Left ventricle myocardium inferior (tissue), 1 donor: ENCODE measurements at regions of chr15 and their contacts with region 1.

Region 1: GRCh38 chr15:30065025-30065801 is 17.5 kb upstream of the GOLGA8J start:
- DNase-seq: no peak
- H3K4me3 ChIP-seq: no peak overlapping the region
- H3K27ac ChIP-seq: no peak overlapping the region
- H3K4me1 ChIP-seq: no peaks in the 10 kb centered on the region
- H3K27me3 ChIP-seq: no peaks in the 10 kb centered on the region
- CTCF ChIP-seq: no peak

Region 2: DNA sequence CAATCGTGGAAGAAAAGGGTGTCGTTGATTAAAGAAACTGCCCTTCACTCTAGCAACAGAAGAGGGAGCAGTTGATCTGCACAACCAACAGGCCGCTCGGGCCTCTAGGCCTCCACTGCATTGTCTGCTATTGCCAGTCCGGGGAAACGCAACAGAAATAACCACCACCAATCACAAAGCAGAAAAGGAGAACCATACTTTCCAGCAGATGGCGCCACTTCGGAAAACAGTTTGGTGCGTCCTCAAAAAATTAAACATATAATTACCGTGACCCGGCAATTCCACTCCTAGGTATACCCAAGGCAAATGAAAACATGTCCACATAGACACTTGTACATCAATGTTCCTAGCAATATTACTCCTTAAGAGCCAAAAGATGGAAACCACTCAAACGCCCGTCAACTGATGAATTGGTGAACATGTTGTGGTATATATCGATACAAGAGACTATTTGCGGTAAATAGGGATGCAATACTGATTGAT is 397.1 kb before region 1 on chr15:
- intact Hi-C with region 1: loop called (anchors 10 kb)
- DNase-seq: no peak
- H3K4me3 ChIP-seq: no peak overlapping the region
- H3K27ac ChIP-seq: no peak overlapping the region
- H3K4me1 ChIP-seq: no peaks in the 10 kb centered on the region
- H3K27me3 ChIP-seq: peaks cover 18% of the 10 kb centered on the region
- CTCF ChIP-seq: peak; percentile 83

Region 3: DNA sequence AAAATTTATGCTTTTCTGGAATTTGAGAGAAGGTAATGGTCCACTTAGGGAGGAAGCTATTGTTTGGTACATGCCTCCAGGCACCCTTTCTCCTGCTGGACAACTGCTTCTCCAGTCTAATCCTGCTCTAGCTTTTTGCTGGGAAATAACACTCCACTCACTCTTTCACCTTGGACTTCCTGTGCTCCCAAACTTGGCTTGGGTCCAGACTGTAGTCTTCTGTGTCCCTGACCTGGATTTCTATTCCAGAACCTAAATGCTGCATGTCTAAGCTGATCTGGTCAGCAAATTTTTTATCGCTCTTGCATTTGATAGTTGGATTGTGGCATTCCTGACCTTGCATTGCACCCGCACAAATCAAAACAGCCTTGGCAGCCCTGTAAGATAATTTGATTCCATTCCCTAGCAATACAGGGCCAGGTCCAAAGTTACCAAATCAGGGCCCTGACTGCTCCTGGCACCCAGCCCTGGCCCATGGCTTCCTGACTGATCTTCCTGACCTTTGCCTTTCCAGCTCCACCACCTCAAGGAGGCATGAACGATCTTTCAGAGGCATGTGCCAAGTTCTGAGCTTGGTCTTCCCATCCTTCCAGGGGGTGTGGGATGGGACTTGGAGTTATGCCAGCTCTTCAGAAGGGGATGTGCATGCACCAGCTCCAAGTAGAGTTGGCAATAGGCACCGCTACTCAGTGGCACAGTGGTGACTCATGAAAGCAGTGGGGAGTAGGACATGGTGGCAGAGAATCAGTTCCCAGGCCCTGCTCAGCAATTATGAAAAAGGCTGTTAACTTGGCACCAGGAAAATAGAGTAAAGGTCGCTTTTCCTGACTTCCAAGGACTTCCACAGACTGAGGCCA is 26.3 kb before region 1 on chr15:
- intact Hi-C with region 1: no loop called
- DNase-seq: no peak
- H3K4me3 ChIP-seq: no peak overlapping the region
- H3K27ac ChIP-seq: no peak overlapping the region
- H3K4me1 ChIP-seq: peaks cover 9% of the 10 kb centered on the region
- H3K27me3 ChIP-seq: no peaks in the 10 kb centered on the region
- CTCF ChIP-seq: no peak